H1 (cell line): ENCODE measurements at regions of chr15 and their contacts with region 1.

Region 1: GRCh38 chr15:38563723-38564519 is 693 bp downstream of the RASGRP1 start:
- DNase-seq: peak in 1 of 2 experiments; percentile 90
- H3K4me3 ChIP-seq: peak overlapping the region; percentile 27 to 78 (median 56)
- H3K27ac ChIP-seq: no peak overlapping the region
- H3K4me1 ChIP-seq: no peaks in the 10 kb centered on the region; a peak in 2 of 7 replicates
- H3K27me3 ChIP-seq: peaks cover 9 to 31% (median 16%) of the 10 kb centered on the region in 4 experiments; a peak in 6 of 7 replicates
- CTCF ChIP-seq: peak; percentile 71 to 84 (median 82)
- EP300 ChIP-seq: no peak
- POLR2A ChIP-seq: no peak
- RAD21 ChIP-seq: peak; percentile 36 to 61; a peak in 3 of 4 replicates

Region 2: GRCh38 chr15:38440353-38441129 is 123.4 kb before region 1 on chr15:
- CTCF ChIA-PET with region 1: interaction called, 11 read pairs
- POLR2A ChIA-PET with region 1: no interaction called
- DNase-seq: peak; percentile 27 to 62
- H3K4me3 ChIP-seq: peak overlapping the region in 1 of 4 experiments; percentile 8; a peak in 1 of 8 replicates
- H3K27ac ChIP-seq: no peak overlapping the region
- H3K4me1 ChIP-seq: peaks cover 0 to 4% (median 3%) of the 10 kb centered on the region in 4 experiments; a peak in 3 of 7 replicates
- H3K27me3 ChIP-seq: no peaks in the 10 kb centered on the region
- CTCF ChIP-seq: peak; percentile 66 to 90 (median 80)
- EP300 ChIP-seq: peak in 1 of 2 experiments; percentile 44; a peak in 1 of 3 replicates
- POLR2A ChIP-seq: no peak
- RAD21 ChIP-seq: peak; percentile 82 to 91

Region 3: DNA sequence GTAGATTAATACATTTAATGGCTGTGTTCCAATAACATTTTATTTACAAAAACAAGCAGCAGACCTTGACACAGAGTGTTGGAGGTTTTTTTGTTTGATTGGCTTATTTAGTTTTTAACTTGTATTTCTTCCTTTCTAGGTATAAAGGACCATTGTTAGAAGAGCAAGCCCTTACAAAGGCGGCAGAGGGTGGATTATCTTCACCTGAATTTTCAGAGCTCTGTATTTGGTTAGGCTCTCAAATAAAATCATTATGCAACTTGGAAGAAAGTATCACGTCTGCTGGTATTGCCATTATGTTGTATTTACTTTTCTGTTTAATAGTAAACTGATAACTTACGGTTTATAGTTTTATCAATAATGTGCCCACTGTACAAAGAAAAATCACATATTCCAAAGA is 100.0 kb before region 1 on chr15:
- CTCF ChIA-PET with region 1: no interaction called
- POLR2A ChIA-PET with region 1: no interaction called
- DNase-seq: no peak
- H3K4me3 ChIP-seq: no peak overlapping the region
- H3K27ac ChIP-seq: no peak overlapping the region
- H3K4me1 ChIP-seq: no peaks in the 10 kb centered on the region
- H3K27me3 ChIP-seq: no peaks in the 10 kb centered on the region
- CTCF ChIP-seq: no peak
- EP300 ChIP-seq: no peak
- POLR2A ChIP-seq: no peak
- RAD21 ChIP-seq: no peak

Region 4: DNA sequence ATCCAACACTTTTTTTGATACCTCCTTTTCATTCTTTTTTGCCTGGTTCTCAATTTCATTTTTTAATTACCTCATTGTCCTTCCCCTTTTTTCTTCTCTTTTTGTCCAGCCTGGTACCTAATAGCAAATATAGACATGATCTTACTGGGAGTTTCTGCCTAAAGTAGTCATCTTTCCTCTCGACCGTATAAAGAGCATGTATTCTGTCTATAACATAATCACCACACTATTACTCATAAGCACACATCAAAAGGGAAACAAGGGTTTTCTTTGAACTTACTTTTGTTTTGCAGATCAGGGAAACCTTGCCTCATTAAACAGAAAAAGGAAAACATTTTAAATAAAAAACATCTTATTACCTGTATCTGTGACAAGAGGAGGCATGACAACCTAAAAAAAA is 77.0 kb before region 1 on chr15:
- CTCF ChIA-PET with region 1: no interaction called
- POLR2A ChIA-PET with region 1: no interaction called
- DNase-seq: no peak
- H3K4me3 ChIP-seq: no peak overlapping the region
- H3K27ac ChIP-seq: no peak overlapping the region
- H3K4me1 ChIP-seq: no peaks in the 10 kb centered on the region
- H3K27me3 ChIP-seq: no peaks in the 10 kb centered on the region
- CTCF ChIP-seq: no peak
- EP300 ChIP-seq: no peak
- POLR2A ChIP-seq: no peak
- RAD21 ChIP-seq: no peak

Region 5: GRCh38 chr15:38499651-38500050 is 64.3 kb before region 1 on chr15:
- CTCF ChIA-PET with region 1: interaction called, 10 read pairs
- POLR2A ChIA-PET with region 1: no interaction called
- DNase-seq: no peak
- H3K4me3 ChIP-seq: no peak overlapping the region
- H3K27ac ChIP-seq: no peak overlapping the region
- H3K4me1 ChIP-seq: no peaks in the 10 kb centered on the region
- H3K27me3 ChIP-seq: no peaks in the 10 kb centered on the region
- CTCF ChIP-seq: no peak
- EP300 ChIP-seq: no peak
- POLR2A ChIP-seq: no peak
- RAD21 ChIP-seq: no peak

Region 6: DNA sequence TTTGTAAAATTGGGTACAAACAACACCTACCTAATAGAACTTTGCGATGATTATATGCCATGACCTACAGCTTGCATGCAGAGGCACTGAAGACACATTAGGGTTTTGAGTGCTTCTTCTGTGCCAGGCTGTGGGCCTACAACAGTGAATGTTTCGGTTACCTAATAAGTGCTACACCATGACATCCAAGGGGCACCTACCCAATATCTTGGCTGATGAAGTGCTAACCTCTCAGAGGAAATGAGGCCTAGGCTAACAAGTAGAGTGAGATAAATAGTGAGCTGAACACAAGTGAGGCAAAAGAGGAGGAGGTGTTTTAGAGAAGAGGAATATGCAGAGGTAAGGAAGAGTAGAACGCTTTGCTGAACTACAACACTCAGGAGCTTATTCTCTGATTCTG is 12.9 kb after region 1 on chr15:
- CTCF ChIA-PET with region 1: interaction called, 16 read pairs
- POLR2A ChIA-PET with region 1: no interaction called
- DNase-seq: no peak
- H3K4me3 ChIP-seq: no peak overlapping the region
- H3K27ac ChIP-seq: no peak overlapping the region
- H3K4me1 ChIP-seq: no peaks in the 10 kb centered on the region
- H3K27me3 ChIP-seq: no peaks in the 10 kb centered on the region
- CTCF ChIP-seq: no peak
- EP300 ChIP-seq: no peak
- POLR2A ChIP-seq: no peak
- RAD21 ChIP-seq: no peak

Region 7: GRCh38 chr15:38631126-38632075 is 67.5 kb after region 1 on chr15:
- CTCF ChIA-PET with region 1: interaction called, 10 read pairs
- POLR2A ChIA-PET with region 1: no interaction called
- DNase-seq: no peak
- H3K4me3 ChIP-seq: no peak overlapping the region
- H3K27ac ChIP-seq: no peak overlapping the region
- H3K4me1 ChIP-seq: no peaks in the 10 kb centered on the region
- H3K27me3 ChIP-seq: no peaks in the 10 kb centered on the region
- CTCF ChIP-seq: no peak
- EP300 ChIP-seq: no peak
- POLR2A ChIP-seq: no peak
- RAD21 ChIP-seq: no peak

Region 8: DNA sequence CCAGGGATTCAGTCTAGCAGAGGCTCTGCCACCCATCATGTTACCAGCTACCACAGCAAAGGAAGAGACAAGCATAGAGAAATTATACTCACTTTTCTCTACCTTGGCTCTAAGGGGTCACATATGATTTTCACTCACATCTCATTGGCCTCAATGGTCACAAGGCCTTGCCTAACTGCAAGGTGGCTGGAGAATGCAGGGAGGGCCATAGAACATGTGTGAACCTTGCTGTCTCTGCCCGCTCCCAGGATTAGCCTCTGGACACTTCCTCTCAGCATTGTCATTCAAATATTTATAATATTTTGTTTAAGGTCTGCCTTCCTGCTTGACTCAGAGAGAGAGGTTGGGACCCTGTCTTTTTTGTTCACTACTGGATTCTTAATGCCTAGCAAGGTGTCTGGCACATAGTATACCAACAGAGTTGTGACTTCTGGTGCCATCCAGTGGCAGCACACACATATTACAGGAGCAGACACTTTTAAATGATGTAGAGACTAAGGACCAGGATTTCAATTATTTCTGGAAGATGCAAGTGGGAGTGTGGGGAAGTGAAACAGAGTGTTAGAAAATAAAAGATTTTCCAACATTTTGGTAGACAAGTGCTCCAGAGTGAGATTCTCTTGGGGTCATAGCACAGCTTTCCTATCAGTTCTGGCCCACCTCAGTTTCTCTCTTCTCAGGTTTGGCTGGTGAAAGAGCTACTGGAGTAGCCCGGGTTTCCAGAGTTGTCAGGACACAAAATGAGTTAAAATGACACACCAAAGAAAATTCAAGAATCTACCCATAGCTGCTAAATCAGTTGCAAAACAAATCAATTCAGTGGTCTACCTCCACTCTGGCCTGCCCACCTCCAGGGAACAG is 119.7 kb after region 1 on chr15:
- CTCF ChIA-PET with region 1: interaction called, 52 read pairs
- POLR2A ChIA-PET with region 1: interaction called, 3 read pairs
- DNase-seq: peak in 1 of 2 experiments; percentile 58
- H3K4me3 ChIP-seq: no peak overlapping the region
- H3K27ac ChIP-seq: no peak overlapping the region
- H3K4me1 ChIP-seq: peaks cover 0 to 1% (median 0%) of the 10 kb centered on the region in 4 experiments; a peak in 1 of 7 replicates
- H3K27me3 ChIP-seq: no peaks in the 10 kb centered on the region
- CTCF ChIP-seq: peak in 2 of 3 experiments; percentile 70 to 81; a peak in 3 of 4 replicates
- EP300 ChIP-seq: no peak
- POLR2A ChIP-seq: no peak
- RAD21 ChIP-seq: peak; percentile 85 to 89

Region 9: GRCh38 chr15:38699633-38700230 is 135.8 kb after region 1 on chr15:
- CTCF ChIA-PET with region 1: interaction called, 12 read pairs
- POLR2A ChIA-PET with region 1: no interaction called
- DNase-seq: peak in 1 of 2 experiments; percentile 63
- H3K4me3 ChIP-seq: no peak overlapping the region
- H3K27ac ChIP-seq: no peak overlapping the region
- H3K4me1 ChIP-seq: peaks cover 0 to 6% (median 3%) of the 10 kb centered on the region in 4 experiments; a peak in 4 of 7 replicates
- H3K27me3 ChIP-seq: no peaks in the 10 kb centered on the region; a peak in 1 of 7 replicates
- CTCF ChIP-seq: peak; percentile 62 to 93 (median 71)
- EP300 ChIP-seq: no peak
- POLR2A ChIP-seq: no peak
- RAD21 ChIP-seq: peak; percentile 66 to 71